IMR-90 (cell line): ENCODE measurements at regions of chr1 and their contacts with region 1.

Region 1: GRCh38 chr1:117067533-117068370 is 7.6 kb downstream of the TTF2 start:
- DNase-seq: peak; percentile 70
- ATAC-seq: peak; percentile 99
- H3K4me3 ChIP-seq: no peak overlapping the region
- H3K27ac ChIP-seq: no peak overlapping the region
- H3K4me1 ChIP-seq: no peaks in the 10 kb centered on the region
- H3K27me3 ChIP-seq: no peaks in the 10 kb centered on the region
- CTCF ChIP-seq: peak; percentile 93
- POLR2A ChIP-seq: peak; percentile 45; the same call in 1 of the 2 replicates
- RAD21 ChIP-seq: peak; percentile 100

Region 2: GRCh38 chr1:116794804-116795481 is 272.8 kb before region 1 on chr1:
- CTCF ChIA-PET with region 1: no interaction called
- POLR2A ChIA-PET with region 1: no interaction called
- dilution Hi-C with region 1: no loop called
- in situ Hi-C with region 1: no loop called
- intact Hi-C with region 1: no loop called
- DNase-seq: no peak
- ATAC-seq: no peak
- H3K4me3 ChIP-seq: no peak overlapping the region
- H3K27ac ChIP-seq: no peak overlapping the region
- H3K4me1 ChIP-seq: no peaks in the 10 kb centered on the region
- H3K27me3 ChIP-seq: no peaks in the 10 kb centered on the region
- CTCF ChIP-seq: no peak
- POLR2A ChIP-seq: no peak
- RAD21 ChIP-seq: no peak

Region 3: GRCh38 chr1:116881879-116882520 is 185.8 kb before region 1 on chr1:
- CTCF ChIA-PET with region 1: no interaction called
- POLR2A ChIA-PET with region 1: no interaction called
- dilution Hi-C with region 1: no loop called
- in situ Hi-C with region 1: no loop called
- intact Hi-C with region 1: no loop called
- DNase-seq: peak; percentile 65
- ATAC-seq: peak; percentile 40; the same call in 1 of the 2 replicates
- H3K4me3 ChIP-seq: no peak overlapping the region
- H3K27ac ChIP-seq: no peak overlapping the region
- H3K4me1 ChIP-seq: peaks cover 8% of the 10 kb centered on the region
- H3K27me3 ChIP-seq: no peaks in the 10 kb centered on the region
- CTCF ChIP-seq: no peak
- POLR2A ChIP-seq: no peak
- RAD21 ChIP-seq: peak; percentile 17; the same call in 1 of the 2 replicates

Region 4: GRCh38 chr1:117116784-117117130 is 49.0 kb after region 1 on chr1:
- CTCF ChIA-PET with region 1: interaction called, 4 read pairs
- POLR2A ChIA-PET with region 1: interaction called, 11 read pairs
- dilution Hi-C with region 1: no loop called
- in situ Hi-C with region 1: loop called (anchors 10 kb)
- intact Hi-C with region 1: loop called (anchors 2 kb)
- DNase-seq: no peak
- ATAC-seq: no peak
- H3K4me3 ChIP-seq: no peak overlapping the region
- H3K27ac ChIP-seq: no peak overlapping the region
- H3K4me1 ChIP-seq: peaks cover 5% of the 10 kb centered on the region; the same call in 1 of the 2 replicates
- H3K27me3 ChIP-seq: no peaks in the 10 kb centered on the region
- CTCF ChIP-seq: no peak
- POLR2A ChIP-seq: no peak
- RAD21 ChIP-seq: no peak

Region 5: GRCh38 chr1:117121776-117122697 is 54.3 kb after region 1 on chr1:
- CTCF ChIA-PET with region 1: interaction called, 8 read pairs
- POLR2A ChIA-PET with region 1: interaction called, 11 read pairs
- dilution Hi-C with region 1: no loop called
- in situ Hi-C with region 1: loop called (anchors 10 kb)
- intact Hi-C with region 1: loop called (anchors 2 kb)
- DNase-seq: peak; percentile 96
- ATAC-seq: peak; percentile 98
- H3K4me3 ChIP-seq: peak overlapping the region; percentile 68
- H3K27ac ChIP-seq: peak overlapping the region; percentile 95
- H3K4me1 ChIP-seq: peaks cover 8% of the 10 kb centered on the region; the same call in 1 of the 2 replicates
- H3K27me3 ChIP-seq: peaks cover 3% of the 10 kb centered on the region
- CTCF ChIP-seq: peak; percentile 88
- POLR2A ChIP-seq: peak; percentile 70
- RAD21 ChIP-seq: peak; percentile 61

Region 6: GRCh38 chr1:117128323-117129079 is 60.7 kb after region 1 on chr1:
- CTCF ChIA-PET with region 1: interaction called, 43 read pairs
- POLR2A ChIA-PET with region 1: no interaction called
- dilution Hi-C with region 1: no loop called
- in situ Hi-C with region 1: loop called (anchors 10 kb)
- intact Hi-C with region 1: loop called (anchors 1 kb)
- DNase-seq: peak; percentile 69
- ATAC-seq: peak; percentile 84
- H3K4me3 ChIP-seq: no peak overlapping the region
- H3K27ac ChIP-seq: no peak overlapping the region
- H3K4me1 ChIP-seq: 0 out of 2 replicates have a peak, but pooled peaks cover 2% of the 10 kb centered on the region
- H3K27me3 ChIP-seq: peaks cover 3% of the 10 kb centered on the region
- CTCF ChIP-seq: peak; percentile 67
- POLR2A ChIP-seq: no peak
- RAD21 ChIP-seq: peak; percentile 67

Region 7: DNA sequence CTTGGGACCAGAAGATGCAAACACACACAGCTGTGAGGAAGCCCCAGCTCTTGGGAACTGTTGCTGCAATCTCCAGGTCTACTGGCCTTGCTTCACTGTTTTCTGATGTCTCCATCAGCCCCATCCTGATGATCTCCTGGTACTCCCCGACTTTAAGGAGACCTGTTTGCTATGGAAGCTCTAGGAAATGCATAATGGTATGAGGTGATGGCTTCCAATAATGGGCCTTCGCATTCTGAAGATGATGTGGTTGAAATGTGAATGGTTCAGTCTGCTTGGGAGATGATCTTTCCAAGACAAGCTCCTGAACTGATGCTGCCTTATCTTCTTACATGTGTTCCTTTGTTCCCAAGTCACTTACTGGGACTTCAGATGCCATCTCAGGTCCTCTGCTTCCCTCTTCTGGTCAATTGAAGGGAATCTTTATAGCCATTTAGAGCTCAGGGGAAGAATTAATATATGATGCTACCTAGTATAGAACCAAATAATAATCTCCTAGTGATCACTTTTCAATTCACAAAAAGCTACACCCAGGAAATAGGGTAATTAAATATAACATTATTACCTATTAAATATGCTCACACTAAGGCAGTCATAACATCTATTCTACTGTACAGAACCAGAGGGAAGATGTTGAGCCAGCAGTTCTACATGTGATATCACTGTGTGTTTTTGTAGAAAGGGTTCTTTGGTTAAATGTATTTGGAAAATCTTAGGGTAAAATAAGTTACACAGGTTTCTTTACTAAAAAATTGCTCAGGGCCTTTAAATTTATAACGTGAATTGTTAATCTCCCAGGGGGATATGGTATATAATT is 216.9 kb after region 1 on chr1:
- CTCF ChIA-PET with region 1: interaction called, 41 read pairs
- POLR2A ChIA-PET with region 1: no interaction called
- dilution Hi-C with region 1: no loop called
- in situ Hi-C with region 1: no loop called
- intact Hi-C with region 1: loop called (anchors 1 kb)
- DNase-seq: peak; percentile 79
- ATAC-seq: peak; percentile 96
- H3K4me3 ChIP-seq: no peak overlapping the region
- H3K27ac ChIP-seq: no peak overlapping the region
- H3K4me1 ChIP-seq: no peaks in the 10 kb centered on the region
- H3K27me3 ChIP-seq: peaks cover 4% of the 10 kb centered on the region
- CTCF ChIP-seq: peak; percentile 86
- POLR2A ChIP-seq: no peak
- RAD21 ChIP-seq: peak; percentile 93

Region 8: GRCh38 chr1:117367047-117368018 is 299.6 kb after region 1 on chr1 and contains the start of gene MAN1A2:
- CTCF ChIA-PET with region 1: no interaction called
- POLR2A ChIA-PET with region 1: no interaction called
- dilution Hi-C with region 1: no loop called
- in situ Hi-C with region 1: no loop called
- intact Hi-C with region 1: loop called (anchors 1 kb)
- DNase-seq: peak; percentile 69
- ATAC-seq: peak; percentile 83
- H3K4me3 ChIP-seq: peak within 1 kb of the TSS; percentile 90
- H3K27ac ChIP-seq: peak within 1 kb of the TSS; percentile 97
- H3K4me1 ChIP-seq: peaks cover 6% of the 10 kb centered on the region
- H3K27me3 ChIP-seq: no peaks in the 10 kb centered on the region
- CTCF ChIP-seq: no peak
- POLR2A ChIP-seq: no peak
- RAD21 ChIP-seq: no peak
- total RNA-seq, gene MAN1A2: 29.4 and 60.8 TPM in 2 replicates

Region 9: DNA sequence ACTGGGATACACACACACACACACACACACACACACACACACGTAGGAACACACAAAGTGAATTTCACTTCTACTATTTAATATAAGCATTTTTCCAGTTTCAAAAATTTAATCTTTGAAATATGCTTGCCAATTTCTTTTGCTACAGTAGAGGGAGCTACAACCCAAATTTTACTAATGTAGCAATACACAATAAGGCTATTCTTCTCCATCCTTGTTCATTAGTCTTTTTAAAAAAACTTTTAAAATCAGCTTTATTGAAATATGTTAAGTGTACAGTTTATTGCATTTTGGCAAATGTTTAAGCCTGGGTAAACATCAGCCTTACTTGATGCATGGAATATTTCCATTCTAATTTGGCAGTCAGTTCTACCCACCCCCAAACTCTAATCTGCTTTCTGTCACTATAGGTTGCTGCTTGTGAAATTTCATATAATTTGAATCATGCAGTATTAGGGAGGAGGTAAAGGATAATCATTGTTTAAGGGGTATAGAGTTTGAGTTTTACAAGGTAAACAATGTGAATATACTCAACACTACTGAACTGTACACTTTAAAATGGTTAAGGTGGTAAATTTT is 445.1 kb after region 1 on chr1:
- CTCF ChIA-PET with region 1: interaction called, 3 read pairs
- POLR2A ChIA-PET with region 1: no interaction called
- dilution Hi-C with region 1: no loop called
- in situ Hi-C with region 1: no loop called
- intact Hi-C with region 1: loop called (anchors 2 kb)
- DNase-seq: peak; percentile 40
- ATAC-seq: peak; percentile 72
- H3K4me3 ChIP-seq: no peak overlapping the region
- H3K27ac ChIP-seq: no peak overlapping the region
- H3K4me1 ChIP-seq: no peaks in the 10 kb centered on the region
- H3K27me3 ChIP-seq: no peaks in the 10 kb centered on the region
- CTCF ChIP-seq: peak; percentile 84
- POLR2A ChIP-seq: no peak
- RAD21 ChIP-seq: peak; percentile 77